Activated naive CD4-positive, alpha-beta T cell treated with anti-CD3 and anti-CD28 coated beads for 36 hours (primary cell): ENCODE measurements at regions of chr18 and their contacts with region 1.

Region 1: DNA sequence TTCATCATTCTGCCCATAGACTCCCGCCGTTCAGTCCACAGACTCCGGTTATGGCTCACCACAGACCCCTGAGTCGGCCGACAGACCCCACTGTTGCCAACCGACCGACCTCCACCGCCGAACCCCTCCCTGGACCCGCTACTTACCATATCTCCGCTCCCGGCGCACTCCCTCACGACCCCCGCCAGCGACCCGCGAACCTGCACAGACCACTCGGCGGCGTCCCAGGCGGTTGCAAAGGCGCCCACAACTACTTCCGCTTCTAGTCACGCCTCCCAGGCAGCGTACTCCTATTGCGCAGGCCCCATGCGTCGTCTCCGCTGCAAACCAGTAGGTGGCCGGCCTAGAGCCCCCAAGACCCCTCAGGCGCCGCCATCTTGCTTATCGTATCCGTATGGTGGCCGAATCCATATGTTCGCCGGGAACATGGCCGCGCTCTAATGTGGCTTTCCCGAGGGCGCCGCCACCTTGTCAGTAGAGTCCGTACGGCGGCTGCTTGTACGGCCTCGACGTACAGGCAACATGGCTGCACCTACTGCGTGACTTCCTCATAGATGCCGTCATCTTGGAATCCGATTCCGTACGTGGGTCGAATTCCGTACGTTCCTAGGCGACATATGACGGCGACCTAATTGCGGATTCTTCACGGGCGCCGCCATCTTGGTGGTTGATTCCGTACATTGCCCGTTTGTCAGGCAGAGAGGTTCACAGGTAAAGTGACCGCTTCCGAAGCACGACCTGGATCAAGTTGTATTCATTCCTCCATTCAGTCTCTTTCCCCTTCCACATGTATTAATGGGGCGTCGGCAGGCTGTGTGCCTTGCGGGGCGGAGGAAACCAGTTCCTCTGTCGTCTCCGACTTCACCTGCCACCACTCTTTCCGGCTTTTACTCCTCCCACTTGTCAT is at the start of gene CXXC1:
- DNase-seq: peak; percentile 97
- H3K4me3 Mint-ChIP-seq: peak within 1 kb of the TSS; percentile 93
- H3K27ac Mint-ChIP-seq: peak within 1 kb of the TSS; percentile 95
- H3K4me1 Mint-ChIP-seq: peaks cover 24% of the 10 kb centered on the region
- H3K27me3 Mint-ChIP-seq: no peaks in the 10 kb centered on the region
- total RNA-seq, gene CXXC1: 71.5 to 75.3 TPM

Region 2: GRCh38 chr18:48934723-48935432 is 1352.8 kb before region 1 on chr18:
- CTCF ChIA-PET with region 1: no interaction called
- intact Hi-C with region 1: loop called (anchors 10 kb)
- DNase-seq: peak; percentile 29
- H3K4me3 Mint-ChIP-seq: peak overlapping the region; percentile 49
- H3K27ac Mint-ChIP-seq: peak overlapping the region; percentile 95
- H3K4me1 Mint-ChIP-seq: peaks cover 82% of the 10 kb centered on the region
- H3K27me3 Mint-ChIP-seq: no peaks in the 10 kb centered on the region

Region 3: GRCh38 chr18:49561289-49562193 is 726.2 kb before region 1 on chr18 and contains the start of gene LIPG:
- CTCF ChIA-PET with region 1: no interaction called
- intact Hi-C with region 1: loop called (anchors 2 kb)
- DNase-seq: peak; percentile 76
- H3K4me3 Mint-ChIP-seq: peak within 1 kb of the TSS; percentile 66
- H3K27ac Mint-ChIP-seq: no peak within 1 kb of the TSS
- H3K4me1 Mint-ChIP-seq: peaks cover 31% of the 10 kb centered on the region
- H3K27me3 Mint-ChIP-seq: peaks cover 65% of the 10 kb centered on the region
- total RNA-seq, gene LIPG: 0.22 to 0.45 TPM

Region 4: DNA sequence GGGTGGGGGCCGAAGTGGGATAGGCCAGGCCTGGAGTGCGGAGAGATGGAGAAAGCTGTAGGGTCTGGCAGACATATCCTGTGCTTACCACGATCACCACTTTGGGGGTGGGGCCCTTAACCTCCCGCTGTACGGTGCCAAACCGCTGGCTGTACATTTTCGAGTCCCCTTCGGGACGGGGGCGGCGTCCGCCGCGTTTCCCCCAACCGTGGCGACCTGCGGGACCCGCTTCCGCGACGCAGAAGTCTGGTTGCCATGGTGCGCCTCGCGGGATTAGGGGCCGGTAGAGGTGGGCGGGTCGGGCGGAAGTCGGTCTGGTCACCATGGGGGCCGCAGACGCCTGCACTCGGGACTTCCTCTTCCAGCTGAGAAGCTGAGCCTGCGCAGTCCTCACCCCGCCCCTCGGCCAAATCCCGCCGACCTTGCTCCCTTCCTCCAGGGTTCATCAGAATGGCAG is 21.4 kb before region 1 on chr18 and contains the start of gene CFAP53:
- CTCF ChIA-PET with region 1: interaction called, 4 read pairs
- intact Hi-C with region 1: loop called (anchors 1 kb)
- DNase-seq: peak; percentile 90
- H3K4me3 Mint-ChIP-seq: peak within 1 kb of the TSS; percentile 76
- H3K27ac Mint-ChIP-seq: no peak within 1 kb of the TSS
- H3K4me1 Mint-ChIP-seq: peaks cover 16% of the 10 kb centered on the region
- H3K27me3 Mint-ChIP-seq: no peaks in the 10 kb centered on the region
- total RNA-seq, gene CFAP53: 0.40 to 0.43 TPM

Region 5: DNA sequence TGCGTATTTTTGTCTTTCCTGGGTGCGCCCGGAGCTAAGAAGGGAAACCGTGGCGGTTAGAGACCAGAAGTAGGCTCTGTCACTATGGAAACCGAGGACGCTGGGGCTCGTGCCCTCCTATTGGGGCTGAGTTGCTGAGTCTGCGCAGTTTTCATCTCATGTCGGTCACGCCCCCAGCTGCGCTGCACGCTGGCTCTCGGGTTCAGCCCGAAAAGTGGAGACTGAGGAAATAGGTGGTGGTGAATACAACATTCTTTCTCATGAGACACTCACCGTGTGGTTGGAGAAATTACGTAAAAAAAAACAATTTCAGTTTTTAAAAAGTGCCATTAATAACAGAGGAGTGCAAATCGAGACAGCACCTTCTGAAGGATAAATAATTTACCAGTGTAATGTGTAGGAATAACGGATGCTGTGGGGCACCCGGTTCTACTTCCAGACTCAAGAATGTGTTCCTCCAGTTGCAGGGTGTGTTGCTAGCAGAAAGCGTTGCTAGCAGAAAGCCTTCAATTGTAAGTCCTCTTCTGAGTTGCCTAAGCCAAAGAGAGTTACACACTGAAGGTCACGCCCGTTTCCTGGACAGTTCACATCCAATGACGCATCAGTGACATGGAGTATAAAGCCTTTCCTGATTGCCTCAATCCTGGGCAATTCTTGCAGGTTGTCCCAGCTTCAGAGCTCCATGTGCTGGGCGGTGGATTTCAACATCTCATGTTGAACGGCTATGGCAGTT is 20.2 kb after region 1 on chr18:
- CTCF ChIA-PET with region 1: no interaction called
- intact Hi-C with region 1: loop called (anchors 1 kb)
- DNase-seq: peak; percentile 96
- H3K4me3 Mint-ChIP-seq: peak overlapping the region; percentile 85
- H3K27ac Mint-ChIP-seq: peak overlapping the region; percentile 52
- H3K4me1 Mint-ChIP-seq: peaks cover 10% of the 10 kb centered on the region
- H3K27me3 Mint-ChIP-seq: peaks cover 11% of the 10 kb centered on the region

Region 6: DNA sequence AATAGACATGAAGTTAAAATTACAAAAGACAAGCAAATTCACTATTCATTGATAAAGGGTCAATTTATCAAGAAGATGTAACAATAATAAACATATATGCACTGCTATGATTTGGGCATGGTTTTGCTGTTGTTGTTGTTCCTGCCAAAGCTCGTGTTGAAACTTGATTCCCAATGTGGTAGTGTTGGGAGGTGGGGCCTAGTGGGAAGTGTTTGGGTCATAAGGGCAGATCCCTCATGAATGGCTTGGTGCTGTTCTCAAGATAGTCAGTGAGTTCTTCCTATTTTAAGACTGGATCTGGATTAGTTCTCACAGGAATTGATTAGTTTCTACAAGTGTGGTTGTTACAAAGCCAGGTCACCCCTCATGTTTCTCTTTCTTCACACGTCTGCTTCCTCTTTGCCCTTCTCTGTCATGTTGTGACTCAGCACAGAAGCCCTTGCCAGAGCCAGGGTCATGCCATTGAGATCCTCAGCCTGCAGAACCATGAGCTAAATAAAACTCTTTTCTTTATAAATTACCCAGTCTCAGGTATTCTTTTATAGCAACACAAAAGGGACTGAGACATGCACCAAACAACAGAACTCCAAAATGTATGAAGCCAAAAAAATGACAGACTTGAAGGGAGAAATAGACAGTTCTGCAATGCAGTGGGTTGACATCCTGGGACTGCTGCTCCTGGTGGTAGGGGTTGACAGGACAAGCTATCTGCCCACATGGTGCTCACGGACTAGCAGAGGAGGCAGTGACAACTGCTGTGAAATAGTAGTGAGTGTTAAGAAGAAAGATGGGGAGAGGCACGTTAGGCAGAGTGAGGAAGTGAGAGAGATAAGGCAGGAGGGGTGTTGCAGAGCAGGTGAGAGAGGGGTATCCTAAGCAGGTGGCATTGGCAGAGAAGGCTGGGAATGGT is 68.6 kb after region 1 on chr18:
- CTCF ChIA-PET with region 1: interaction called, 4 read pairs
- intact Hi-C with region 1: loop called (anchors 1 kb)
- DNase-seq: no peak
- H3K4me3 Mint-ChIP-seq: no peak overlapping the region
- H3K27ac Mint-ChIP-seq: no peak overlapping the region
- H3K4me1 Mint-ChIP-seq: peaks cover 8% of the 10 kb centered on the region
- H3K27me3 Mint-ChIP-seq: peaks cover 5% of the 10 kb centered on the region

Region 7: GRCh38 chr18:50429207-50429948 is 141.7 kb after region 1 on chr18:
- CTCF ChIA-PET with region 1: interaction called, 3 read pairs
- intact Hi-C with region 1: loop called (anchors 5 kb)
- DNase-seq: no peak
- H3K4me3 Mint-ChIP-seq: no peak overlapping the region
- H3K27ac Mint-ChIP-seq: no peak overlapping the region
- H3K4me1 Mint-ChIP-seq: no peaks in the 10 kb centered on the region
- H3K27me3 Mint-ChIP-seq: peaks cover under 1% of the 10 kb centered on the region